ENCODE measurements at regions of chr13 and their contacts with region 1.

Region 1: GRCh38 chr13:50055454-50055853 is 40.2 kb downstream of the KCNRG start:
- DNase-seq: no peak
- ATAC-seq: no peak
- H3K4me3 ChIP-seq: no peak overlapping the region
- H3K4me3 Mint-ChIP-seq: peak overlapping the region in 1 of 10 donors; percentile 61
- H3K27ac ChIP-seq: no peak overlapping the region
- H3K27ac Mint-ChIP-seq: peak overlapping the region in 2 of 9 donors; percentile 15 to 28
- H3K4me1 ChIP-seq: no peaks in the 10 kb centered on the region
- H3K4me1 Mint-ChIP-seq: peaks cover 0 to 46% (median 10%) of the 10 kb centered on the region in 7 donors
- H3K27me3 ChIP-seq: no peaks in the 10 kb centered on the region
- H3K27me3 Mint-ChIP-seq: no peaks in the 10 kb centered on the region

Region 2: GRCh38 chr13:49731766-49732165 is 323.7 kb before region 1 on chr13:
- CTCF ChIA-PET with region 1: no interaction called
- POLR2A ChIA-PET with region 1: no interaction called
- intact Hi-C with region 1: no loop called
- DNase-seq: no peak
- ATAC-seq: no peak
- H3K4me3 ChIP-seq: no peak overlapping the region
- H3K4me3 Mint-ChIP-seq: no peak overlapping the region
- H3K27ac ChIP-seq: no peak overlapping the region
- H3K27ac Mint-ChIP-seq: no peak overlapping the region
- H3K4me1 ChIP-seq: no peaks in the 10 kb centered on the region
- H3K4me1 Mint-ChIP-seq: no peaks in the 10 kb centered on the region
- H3K27me3 ChIP-seq: no peaks in the 10 kb centered on the region
- H3K27me3 Mint-ChIP-seq: no peaks in the 10 kb centered on the region

Region 3: GRCh38 chr13:49760558-49760957 is 294.9 kb before region 1 on chr13:
- CTCF ChIA-PET with region 1: no interaction called
- POLR2A ChIA-PET with region 1: no interaction called
- intact Hi-C with region 1: no loop called
- DNase-seq: no peak
- ATAC-seq: no peak
- H3K4me3 ChIP-seq: no peak overlapping the region
- H3K4me3 Mint-ChIP-seq: peak overlapping the region in 1 of 10 donors; percentile 55
- H3K27ac ChIP-seq: no peak overlapping the region
- H3K27ac Mint-ChIP-seq: peak overlapping the region in 3 of 9 donors; percentile 15 to 73 (median 57)
- H3K4me1 ChIP-seq: peaks cover 0 to 11% of the 10 kb centered on the region in 2 donors
- H3K4me1 Mint-ChIP-seq: peaks cover 25 to 69% (median 50%) of the 10 kb centered on the region in 7 donors
- H3K27me3 ChIP-seq: no peaks in the 10 kb centered on the region
- H3K27me3 Mint-ChIP-seq: no peaks in the 10 kb centered on the region

Region 4: GRCh38 chr13:50072676-50073075 is 17.2 kb after region 1 on chr13:
- CTCF ChIA-PET with region 1: no interaction called
- POLR2A ChIA-PET with region 1: interaction called, 4 read pairs
- intact Hi-C with region 1: loop called in 1 of 2 experiments (anchors 2 kb)
- DNase-seq: no peak
- ATAC-seq: no peak
- H3K4me3 ChIP-seq: no peak overlapping the region
- H3K4me3 Mint-ChIP-seq: no peak overlapping the region
- H3K27ac ChIP-seq: no peak overlapping the region
- H3K27ac Mint-ChIP-seq: no peak overlapping the region
- H3K4me1 ChIP-seq: no peaks in the 10 kb centered on the region
- H3K4me1 Mint-ChIP-seq: peaks cover 0 to 61% (median 9%) of the 10 kb centered on the region in 7 donors
- H3K27me3 ChIP-seq: peaks cover 0 to 7% of the 10 kb centered on the region in 2 donors
- H3K27me3 Mint-ChIP-seq: peaks cover 0 to 10% (median 7%) of the 10 kb centered on the region in 5 donors

Region 5: DNA sequence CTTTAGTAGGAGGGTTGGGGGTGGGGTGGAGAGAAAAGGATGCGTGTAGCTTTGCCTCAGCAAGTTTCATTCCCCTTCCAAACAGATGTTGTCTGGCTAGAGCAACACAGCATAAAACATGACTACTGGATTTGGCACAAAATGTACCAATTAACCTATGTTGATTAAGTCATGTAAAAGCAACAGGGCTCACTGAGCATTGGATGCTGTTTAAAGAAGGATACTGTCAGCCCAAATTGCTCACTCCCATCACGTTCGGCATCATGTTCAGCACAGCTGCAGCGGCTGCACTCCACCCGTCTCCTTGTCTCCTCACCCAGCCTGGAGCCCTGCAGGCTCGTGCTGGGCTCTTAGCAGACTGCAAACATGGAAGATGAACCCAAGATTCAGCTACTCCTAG is 710.6 kb after region 1 on chr13:
- CTCF ChIA-PET with region 1: no interaction called
- POLR2A ChIA-PET with region 1: no interaction called
- intact Hi-C with region 1: no loop called
- DNase-seq: no peak
- ATAC-seq: no peak
- H3K4me3 ChIP-seq: no peak overlapping the region
- H3K4me3 Mint-ChIP-seq: no peak overlapping the region
- H3K27ac ChIP-seq: no peak overlapping the region
- H3K27ac Mint-ChIP-seq: no peak overlapping the region
- H3K4me1 ChIP-seq: no peaks in the 10 kb centered on the region
- H3K4me1 Mint-ChIP-seq: no peaks in the 10 kb centered on the region
- H3K27me3 ChIP-seq: no peaks in the 10 kb centered on the region
- H3K27me3 Mint-ChIP-seq: peaks cover 0 to 24% (median 0%) of the 10 kb centered on the region in 5 donors

Region 6: DNA sequence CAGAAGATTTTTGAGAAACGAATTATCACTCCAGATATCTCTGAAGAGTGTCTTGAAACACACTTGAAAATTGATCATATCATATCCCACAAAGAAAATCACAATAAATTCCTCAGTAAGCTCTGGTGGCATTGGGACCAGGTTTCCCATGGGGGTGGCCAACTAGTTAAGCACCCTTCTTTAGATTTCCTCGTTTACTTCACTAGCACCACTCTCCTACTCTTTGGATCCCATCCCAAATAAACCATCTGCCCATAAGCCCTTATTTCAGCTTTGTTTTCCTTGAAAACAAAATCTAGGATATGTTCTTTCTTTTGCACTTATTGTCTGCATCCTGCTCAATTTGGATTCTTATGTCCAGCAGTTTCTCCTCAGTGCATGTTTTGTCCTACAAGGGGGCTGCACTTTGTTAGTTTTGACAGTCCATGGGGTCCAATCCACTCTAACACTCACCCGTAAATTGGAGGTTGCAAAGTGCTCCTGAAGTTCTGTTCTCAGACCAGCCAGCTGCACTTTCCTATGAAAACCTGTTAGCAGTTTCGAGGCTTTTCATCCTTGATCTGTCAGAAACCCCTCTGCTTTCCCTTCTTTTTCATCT is 1126.4 kb after region 1 on chr13:
- CTCF ChIA-PET with region 1: no interaction called
- POLR2A ChIA-PET with region 1: no interaction called
- intact Hi-C with region 1: no loop called
- DNase-seq: no peak
- ATAC-seq: no peak
- H3K4me3 ChIP-seq: no peak overlapping the region
- H3K4me3 Mint-ChIP-seq: no peak overlapping the region
- H3K27ac ChIP-seq: no peak overlapping the region
- H3K27ac Mint-ChIP-seq: no peak overlapping the region
- H3K4me1 ChIP-seq: no peaks in the 10 kb centered on the region
- H3K4me1 Mint-ChIP-seq: no peaks in the 10 kb centered on the region
- H3K27me3 ChIP-seq: no peaks in the 10 kb centered on the region
- H3K27me3 Mint-ChIP-seq: peaks cover 28 to 47% (median 33%) of the 10 kb centered on the region in 5 donors